OCI-LY7 (cell line): ENCODE measurements at regions of chr18 and their contacts with region 1.

Region 1: DNA sequence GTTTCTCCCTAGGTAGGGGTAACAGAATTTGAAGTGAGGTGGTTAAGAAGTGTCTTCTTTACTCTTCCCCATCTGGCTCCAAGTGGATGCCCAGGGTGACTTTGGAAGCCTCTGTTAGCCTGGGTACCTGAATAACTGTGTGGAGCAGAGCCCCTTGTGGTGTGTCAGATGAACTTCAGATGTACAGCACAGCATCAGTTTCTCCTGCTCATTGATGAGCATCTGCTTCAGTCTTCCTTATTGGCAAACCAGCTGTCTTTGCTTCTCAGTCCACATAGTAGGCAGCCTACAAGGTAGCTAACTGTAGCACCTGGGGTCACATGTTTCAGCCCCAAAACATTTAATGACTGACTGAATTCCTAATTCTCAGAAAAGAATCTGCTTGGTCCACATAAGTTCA is 56.2 kb upstream of the ATP8B1 start:
- DNase-seq: peak; percentile 4
- H3K4me3 ChIP-seq: no peak overlapping the region
- H3K27ac ChIP-seq: no peak overlapping the region
- H3K4me1 ChIP-seq: no peaks in the 10 kb centered on the region
- CTCF ChIP-seq: peak; percentile 55

Region 2: DNA sequence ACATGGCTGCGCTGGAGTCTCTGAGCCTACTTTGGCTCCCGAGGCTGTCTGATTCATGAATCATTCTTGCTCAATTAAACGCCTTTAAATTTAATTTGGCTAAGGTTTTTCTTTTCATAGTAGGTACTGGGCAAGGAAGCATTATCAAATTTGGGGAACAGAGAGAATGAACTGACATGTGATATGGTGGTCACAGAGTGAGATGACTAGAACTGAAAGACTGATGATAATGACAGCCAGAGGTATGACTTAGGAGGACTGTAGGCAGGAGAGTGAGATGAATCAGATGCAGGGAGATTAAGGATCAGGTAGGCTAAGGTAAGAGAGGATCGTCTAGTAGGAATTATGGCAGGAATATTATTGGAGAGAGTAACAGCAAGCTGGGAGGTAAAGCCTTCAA is 547.8 kb before region 1 on chr18:
- CTCF ChIA-PET with region 1: no interaction called
- POLR2A ChIA-PET with region 1: no interaction called
- intact Hi-C with region 1: no loop called
- DNase-seq: no peak
- H3K4me3 ChIP-seq: no peak overlapping the region
- H3K27ac ChIP-seq: no peak overlapping the region
- H3K4me1 ChIP-seq: no peaks in the 10 kb centered on the region
- CTCF ChIP-seq: no peak

Region 3: GRCh38 chr18:57630002-57630753 is 229.1 kb before region 1 on chr18:
- CTCF ChIA-PET with region 1: no interaction called
- POLR2A ChIA-PET with region 1: no interaction called
- intact Hi-C with region 1: loop called (anchors 10 kb)
- DNase-seq: peak; percentile 90
- H3K4me3 ChIP-seq: peak overlapping the region; percentile 91
- H3K27ac ChIP-seq: peak overlapping the region; percentile 94
- H3K4me1 ChIP-seq: peaks cover 11% of the 10 kb centered on the region
- CTCF ChIP-seq: peak; percentile 72

Region 4: GRCh38 chr18:57789090-57789489 is 70.2 kb before region 1 on chr18:
- CTCF ChIA-PET with region 1: no interaction called
- POLR2A ChIA-PET with region 1: no interaction called
- intact Hi-C with region 1: no loop called
- DNase-seq: no peak
- H3K4me3 ChIP-seq: no peak overlapping the region
- H3K27ac ChIP-seq: no peak overlapping the region
- H3K4me1 ChIP-seq: no peaks in the 10 kb centered on the region
- CTCF ChIP-seq: no peak

Region 5: DNA sequence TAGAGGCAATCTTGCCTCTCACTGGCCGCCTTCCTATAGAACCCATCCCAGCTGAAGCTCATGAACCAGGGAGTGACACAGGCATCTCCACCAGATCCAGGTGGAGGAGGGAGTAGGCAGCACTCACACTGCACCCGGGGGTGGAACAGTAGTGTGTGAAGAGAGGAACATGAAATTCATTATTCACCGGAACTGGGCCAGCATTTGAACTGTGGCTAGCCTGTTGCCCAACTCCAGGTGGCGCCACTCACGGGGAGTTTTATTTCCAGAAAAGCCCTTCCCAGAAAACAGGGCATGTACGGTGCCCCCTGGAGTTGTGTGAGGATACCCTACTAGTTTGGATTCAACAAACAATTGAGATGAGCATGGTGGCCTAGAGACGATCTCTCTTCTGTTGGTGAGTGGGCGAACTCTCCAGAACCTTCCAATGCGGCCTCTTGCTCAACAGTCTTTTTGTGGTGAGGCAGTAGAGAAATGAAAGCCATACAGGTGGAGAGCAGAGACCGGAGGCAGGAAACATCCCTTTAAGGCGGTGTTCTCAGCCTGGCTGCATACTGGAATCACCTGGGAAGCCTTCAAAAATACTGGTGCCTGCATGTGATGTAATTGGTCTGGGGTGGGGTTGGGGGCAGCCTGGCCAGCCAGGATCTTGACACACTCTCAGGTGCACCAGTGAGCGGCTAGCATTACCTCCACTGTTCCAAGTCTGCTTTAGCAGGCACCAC is 111.2 kb after region 1 on chr18:
- CTCF ChIA-PET with region 1: no interaction called
- POLR2A ChIA-PET with region 1: no interaction called
- intact Hi-C with region 1: no loop called
- DNase-seq: no peak
- H3K4me3 ChIP-seq: no peak overlapping the region
- H3K27ac ChIP-seq: no peak overlapping the region
- H3K4me1 ChIP-seq: no peaks in the 10 kb centered on the region
- CTCF ChIP-seq: peak; percentile 30; the same call in 1 of the 2 replicates

Region 6: GRCh38 chr18:58231930-58232329 is 372.6 kb after region 1 on chr18:
- CTCF ChIA-PET with region 1: no interaction called
- POLR2A ChIA-PET with region 1: no interaction called
- intact Hi-C with region 1: no loop called
- DNase-seq: no peak
- H3K4me3 ChIP-seq: no peak overlapping the region
- H3K27ac ChIP-seq: no peak overlapping the region
- H3K4me1 ChIP-seq: no peaks in the 10 kb centered on the region
- CTCF ChIP-seq: 0 out of 2 replicates have a peak, but pooled peaks have one; percentile 19